PC-3 (cell line): ENCODE measurements at regions of chr20 and their contacts with region 1.

Region 1: GRCh38 chr20:17558154-17558940 is 11.5 kb upstream of the DSTN start:
- DNase-seq: peak; percentile 95
- ATAC-seq: peak; percentile 76
- H3K4me3 ChIP-seq: peak overlapping the region; percentile 64
- H3K27ac ChIP-seq: peak overlapping the region; percentile 98
- H3K4me1 ChIP-seq: peaks cover 50% of the 10 kb centered on the region
- H3K27me3 ChIP-seq: no peaks in the 10 kb centered on the region
- CTCF ChIP-seq: no peak

Region 2: GRCh38 chr20:17569616-17570346 is 11.4 kb after region 1 on chr20 and contains the start of gene DSTN:
- CTCF ChIA-PET with region 1: interaction called, 3 read pairs
- POLR2A ChIA-PET with region 1: interaction called, 26 read pairs
- intact Hi-C with region 1: loop called (anchors 1 kb)
- DNase-seq: peak; percentile 98
- ATAC-seq: peak; percentile 71
- H3K4me3 ChIP-seq: peak within 1 kb of the TSS; percentile 97
- H3K27ac ChIP-seq: peak within 1 kb of the TSS; percentile 89
- H3K4me1 ChIP-seq: peaks cover 39% of the 10 kb centered on the region
- H3K27me3 ChIP-seq: no peaks in the 10 kb centered on the region
- CTCF ChIP-seq: no peak
- total RNA-seq, gene DSTN: 177 and 182 TPM in 2 replicates